ENCODE measurements at regions of chr6 and their contacts with region 1.

Region 1: GRCh38 chr6:137944793-137945498 is 77.9 kb downstream of the TNFAIP3 start:
- DNase-seq: no peak
- CTCF ChIP-seq: peak; percentile 58

Region 2: DNA sequence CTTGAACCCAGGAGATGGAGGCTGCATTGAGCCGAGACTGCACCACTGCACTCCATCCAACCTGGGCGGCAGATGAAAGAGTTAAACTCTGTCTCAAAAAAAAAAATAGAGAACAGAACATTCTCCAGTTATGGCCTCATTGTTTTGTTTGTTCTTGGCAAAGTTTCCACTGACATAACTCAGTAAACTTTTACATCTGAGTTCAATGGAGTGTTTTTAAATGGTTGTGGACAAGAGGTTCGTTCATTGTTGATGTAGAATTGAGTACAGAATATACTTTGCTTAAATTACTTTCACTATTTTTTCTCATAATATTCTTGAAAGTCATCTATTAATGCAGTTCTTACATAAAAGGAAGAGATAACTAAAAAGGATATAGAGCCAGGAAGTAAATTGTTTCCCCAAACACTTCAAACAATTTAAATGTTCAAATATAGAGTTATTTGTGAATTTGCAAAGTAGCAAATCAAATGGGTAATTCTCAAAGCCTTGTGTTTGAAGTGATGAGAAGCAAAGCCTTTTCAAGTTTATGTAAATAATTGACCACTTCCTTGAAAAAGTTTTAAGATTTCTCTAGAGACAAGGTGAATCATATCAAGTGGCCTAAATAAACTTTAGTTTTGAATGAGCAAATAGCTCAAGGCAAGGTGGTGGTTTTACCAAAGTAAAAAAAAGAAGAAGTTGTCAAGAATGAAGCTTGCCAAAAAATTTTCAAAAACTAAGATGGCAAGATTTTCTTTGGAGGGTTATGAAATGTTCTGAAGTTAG is 683.4 kb before region 1 on chr6:
- in situ Hi-C with region 1: no loop called
- DNase-seq: peak; percentile 38
- CTCF ChIP-seq: no peak

Region 3: GRCh38 chr6:137707590-137708360 is 237.2 kb before region 1 on chr6:
- in situ Hi-C with region 1: loop called (anchors 10 kb)
- DNase-seq: peak; percentile 59
- CTCF ChIP-seq: peak; percentile 38

Region 4: DNA sequence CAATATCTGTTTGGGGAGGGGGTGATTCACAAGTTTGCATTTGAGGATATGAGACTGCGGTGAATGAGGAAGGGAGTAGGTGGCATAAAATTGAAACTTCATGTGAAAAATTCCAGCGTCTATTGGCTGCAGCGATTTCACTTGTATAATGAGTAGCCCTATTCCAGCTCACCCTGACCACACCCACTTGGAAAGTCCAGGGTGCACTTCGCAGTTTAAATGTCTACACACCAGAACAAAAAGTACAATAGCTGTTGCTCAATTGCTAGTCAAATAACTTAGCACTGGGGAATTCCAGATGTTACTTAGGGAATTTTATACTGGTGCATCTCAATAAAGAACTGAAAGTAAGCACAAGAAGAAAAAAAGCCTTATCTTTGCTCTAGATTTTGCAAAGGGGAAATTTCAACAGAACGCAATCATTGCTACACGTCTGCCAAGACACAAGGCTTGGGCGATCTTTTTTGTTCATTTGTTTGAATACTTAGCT is 71.6 kb before region 1 on chr6:
- in situ Hi-C with region 1: loop called (anchors 10 kb)
- DNase-seq: peak; percentile 58
- CTCF ChIP-seq: no peak

Region 5: GRCh38 chr6:138377844-138378243 is 432.9 kb after region 1 on chr6 and contains the start of gene SMIM28:
- in situ Hi-C with region 1: no loop called
- DNase-seq: no peak
- CTCF ChIP-seq: no peak